Right cardiac atrium (tissue), 5 donors: ENCODE measurements at regions of chr10 and their contacts with region 1.

Region 1: DNA sequence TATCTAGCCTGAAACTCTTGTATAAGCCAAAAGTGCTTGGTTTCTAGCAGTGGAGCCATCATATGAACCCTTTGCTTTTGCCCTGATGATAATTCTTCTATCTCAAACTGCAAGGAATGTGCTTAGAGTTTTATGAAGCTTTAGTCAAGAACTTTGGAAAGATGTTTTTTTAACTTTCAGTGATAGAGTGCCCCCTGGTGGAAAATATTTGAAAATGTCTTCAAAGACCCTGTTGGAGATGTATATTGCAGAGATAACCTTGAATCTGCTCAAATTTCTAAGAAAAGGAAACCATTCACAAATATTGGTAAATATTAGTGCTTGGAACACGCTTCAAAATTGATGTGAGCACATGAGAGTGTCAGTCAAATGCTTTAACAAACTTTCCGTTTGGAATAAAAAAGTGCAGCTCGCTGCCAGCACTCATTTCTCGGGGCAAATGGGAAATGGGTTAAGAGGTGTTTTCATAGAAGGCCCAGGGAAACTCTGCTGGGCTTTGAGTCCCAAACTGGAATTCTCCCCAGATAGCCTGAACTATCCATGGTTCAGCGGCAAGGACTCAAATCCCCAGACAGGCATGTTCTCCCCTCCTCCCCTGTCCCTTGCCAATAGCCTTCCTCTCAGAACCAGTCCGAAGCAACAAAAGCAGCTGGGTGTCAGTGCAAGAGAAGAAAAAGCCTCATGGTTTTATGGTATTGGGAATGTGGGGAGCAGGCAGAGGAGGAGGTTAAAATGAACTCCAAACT is 129.3 kb downstream of the MYOF start:
- DNase-seq: no peak
- ATAC-seq: no peak
- H3K4me3 ChIP-seq: no peak overlapping the region
- H3K27ac ChIP-seq: no peak overlapping the region
- H3K4me1 ChIP-seq: no peaks in the 10 kb centered on the region
- H3K27me3 ChIP-seq: no peaks in the 10 kb centered on the region

Region 2: GRCh38 chr10:92880233-92880861 is 472.5 kb before region 1 on chr10:
- intact Hi-C with region 1: loop called in 1 of 4 experiments (anchors 10 kb)
- DNase-seq: no peak
- ATAC-seq: peak; percentile 56 to 64
- H3K4me3 ChIP-seq: no peak overlapping the region
- H3K27ac ChIP-seq: no peak overlapping the region
- H3K4me1 ChIP-seq: no peaks in the 10 kb centered on the region
- H3K27me3 ChIP-seq: no peaks in the 10 kb centered on the region

Region 3: GRCh38 chr10:93080350-93081046 is 272.3 kb before region 1 on chr10:
- intact Hi-C with region 1: loop called (anchors 5 to 10 kb)
- DNase-seq: peak in 2 of 3 donors; percentile 57 to 77
- ATAC-seq: peak; percentile 66 to 75
- H3K4me3 ChIP-seq: no peak overlapping the region
- H3K27ac ChIP-seq: no peak overlapping the region
- H3K4me1 ChIP-seq: no peaks in the 10 kb centered on the region
- H3K27me3 ChIP-seq: no peaks in the 10 kb centered on the region

Region 4: DNA sequence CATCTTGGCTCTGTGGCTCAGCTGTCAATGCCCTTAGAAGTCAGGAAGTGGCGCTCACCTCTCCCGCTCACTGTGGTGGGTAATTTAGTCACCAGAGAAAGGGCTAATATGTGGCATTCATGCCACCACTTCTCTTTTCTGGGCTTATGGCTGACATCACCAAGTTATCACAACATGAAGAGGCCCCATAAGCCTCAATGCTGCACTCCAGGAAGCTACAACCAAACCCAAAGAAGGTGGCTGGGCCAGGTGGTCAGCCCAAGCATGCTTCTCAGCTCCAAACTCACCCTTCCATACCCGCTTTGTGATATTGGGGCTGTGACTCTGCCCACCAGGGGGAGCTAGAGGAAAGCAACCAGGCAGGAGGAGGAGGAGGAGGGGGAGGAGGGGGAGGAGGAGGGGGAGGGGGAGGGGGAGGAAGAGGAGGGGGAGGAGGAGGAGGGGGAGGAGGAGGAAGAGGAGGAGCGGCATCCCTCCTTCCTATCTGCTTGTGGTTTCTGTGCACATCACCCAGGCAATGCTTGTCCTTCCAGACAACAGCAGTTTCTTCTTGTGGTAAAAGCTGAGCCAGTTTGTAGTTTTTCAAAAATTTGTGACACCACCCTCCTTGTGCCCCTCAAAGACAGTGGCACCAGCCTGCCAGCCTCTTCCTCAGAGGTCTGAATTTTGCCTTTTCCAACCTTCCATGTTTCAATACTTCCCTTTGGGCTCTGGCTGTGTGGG is 237.0 kb before region 1 on chr10:
- intact Hi-C with region 1: loop called in 2 of 4 experiments (anchors 10 kb)
- DNase-seq: peak; percentile 63 to 86 (median 82)
- ATAC-seq: peak; percentile 47 to 57
- H3K4me3 ChIP-seq: no peak overlapping the region
- H3K27ac ChIP-seq: no peak overlapping the region
- H3K4me1 ChIP-seq: no peaks in the 10 kb centered on the region
- H3K27me3 ChIP-seq: no peaks in the 10 kb centered on the region